Activated CD4-positive, alpha-beta memory T cell treated with anti-CD3 and anti-CD28 coated beads, Interleukin-2, amount 10 ng/mL, durations not matched to agents 7 days and 5 days (primary cell): ENCODE measurements at regions of chr4 and their contacts with region 1.

Region 1: GRCh38 chr4:16029262-16029661 is 54.6 kb downstream of the PROM1 start:
- DNase-seq: no peak
- H3K4me3 Mint-ChIP-seq: no peak overlapping the region
- H3K27ac Mint-ChIP-seq: no peak overlapping the region
- H3K4me1 Mint-ChIP-seq: peaks cover 2% of the 10 kb centered on the region
- H3K27me3 Mint-ChIP-seq: peaks cover 21% of the 10 kb centered on the region

Region 2: DNA sequence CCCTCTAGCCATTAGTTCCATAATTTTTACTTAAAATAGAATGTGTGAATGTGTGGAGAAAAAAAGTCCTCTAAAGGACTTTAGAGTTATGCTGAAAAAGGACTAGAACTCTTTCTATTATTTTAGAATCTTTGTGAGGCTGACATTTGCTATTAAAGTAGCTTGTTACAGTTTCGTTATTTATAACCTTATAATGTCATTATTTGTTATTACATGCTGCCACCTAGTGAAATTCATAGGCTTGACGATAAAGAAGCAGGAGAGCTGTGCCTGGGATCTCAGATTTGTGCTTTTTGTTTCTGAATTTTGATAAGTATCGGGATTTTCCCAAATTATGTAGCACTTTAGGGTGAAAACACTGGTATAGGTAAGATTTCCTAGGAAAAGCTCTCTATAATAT is 235.5 kb after region 1 on chr4:
- CTCF ChIA-PET with region 1: interaction called, 21 read pairs
- POLR2A ChIA-PET with region 1: no interaction called
- DNase-seq: no peak
- H3K4me3 Mint-ChIP-seq: no peak overlapping the region
- H3K27ac Mint-ChIP-seq: no peak overlapping the region
- H3K4me1 Mint-ChIP-seq: peaks cover 7% of the 10 kb centered on the region
- H3K27me3 Mint-ChIP-seq: peaks cover 3% of the 10 kb centered on the region